ENCODE measurements at regions of chr7 and their contacts with region 1.

Region 1: GRCh38 chr7:141430455-141431137 is 120.6 kb upstream of the AGK start:
- DNase-seq: no peak
- H3K4me3 ChIP-seq: no peak overlapping the region
- H3K27ac ChIP-seq: no peak overlapping the region
- H3K4me1 ChIP-seq: no peaks in the 10 kb centered on the region
- H3K27me3 ChIP-seq: no peaks in the 10 kb centered on the region
- CTCF ChIP-seq: no peak

Region 2: GRCh38 chr7:140673063-140673773 is 757.4 kb before region 1 on chr7:
- CTCF ChIA-PET with region 1: interaction called, 17 read pairs
- dilution Hi-C with region 1: no loop called
- in situ Hi-C with region 1: no loop called
- intact Hi-C with region 1: no loop called
- DNase-seq: peak; percentile 56
- H3K4me3 ChIP-seq: peak overlapping the region; percentile 53 to 69 (median 64)
- H3K27ac ChIP-seq: no peak overlapping the region
- H3K4me1 ChIP-seq: peaks cover 26% of the 10 kb centered on the region
- H3K27me3 ChIP-seq: no peaks in the 10 kb centered on the region
- CTCF ChIP-seq: peak in 1 of 2 donors; percentile 3

Region 3: GRCh38 chr7:141209454-141209853 is 221.1 kb before region 1 on chr7:
- CTCF ChIA-PET with region 1: no interaction called
- dilution Hi-C with region 1: no loop called
- in situ Hi-C with region 1: no loop called
- intact Hi-C with region 1: no loop called
- DNase-seq: no peak
- H3K4me3 ChIP-seq: no peak overlapping the region
- H3K27ac ChIP-seq: peak overlapping the region; percentile 52
- H3K4me1 ChIP-seq: peaks cover 18% of the 10 kb centered on the region
- H3K27me3 ChIP-seq: peaks cover 3% of the 10 kb centered on the region
- CTCF ChIP-seq: no peak

Region 4: GRCh38 chr7:141354251-141354650 is 76.3 kb before region 1 on chr7:
- CTCF ChIA-PET with region 1: no interaction called
- dilution Hi-C with region 1: no loop called
- in situ Hi-C with region 1: no loop called
- intact Hi-C with region 1: no loop called
- DNase-seq: peak; percentile 34
- H3K4me3 ChIP-seq: no peak overlapping the region
- H3K27ac ChIP-seq: no peak overlapping the region
- H3K4me1 ChIP-seq: peaks cover 13% of the 10 kb centered on the region
- H3K27me3 ChIP-seq: no peaks in the 10 kb centered on the region
- CTCF ChIP-seq: no peak

Region 5: DNA sequence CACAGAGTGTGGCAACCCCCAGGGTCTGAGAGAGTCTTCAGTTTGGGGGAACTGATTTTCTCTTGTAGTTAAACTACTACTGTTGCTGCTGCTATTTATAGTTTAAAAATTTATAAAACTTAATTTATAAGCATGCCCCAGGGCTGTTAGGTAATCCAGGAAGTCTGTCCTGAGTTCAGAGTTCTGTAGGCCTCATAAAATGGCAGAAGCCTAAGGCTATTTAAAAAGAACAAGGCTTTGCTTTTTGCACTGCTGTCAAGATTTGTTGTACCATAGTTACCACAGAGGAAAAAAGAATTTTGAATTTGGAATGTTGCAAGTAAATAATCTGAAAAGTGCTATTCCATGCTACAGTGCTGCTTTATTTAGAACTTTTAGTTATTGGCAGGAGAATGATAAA is 186.7 kb after region 1 on chr7:
- CTCF ChIA-PET with region 1: no interaction called
- dilution Hi-C with region 1: no loop called
- in situ Hi-C with region 1: no loop called
- intact Hi-C with region 1: no loop called
- DNase-seq: peak; percentile 6
- H3K4me3 ChIP-seq: no peak overlapping the region
- H3K27ac ChIP-seq: no peak overlapping the region
- H3K4me1 ChIP-seq: peaks cover 5% of the 10 kb centered on the region
- H3K27me3 ChIP-seq: no peaks in the 10 kb centered on the region
- CTCF ChIP-seq: no peak

Region 6: DNA sequence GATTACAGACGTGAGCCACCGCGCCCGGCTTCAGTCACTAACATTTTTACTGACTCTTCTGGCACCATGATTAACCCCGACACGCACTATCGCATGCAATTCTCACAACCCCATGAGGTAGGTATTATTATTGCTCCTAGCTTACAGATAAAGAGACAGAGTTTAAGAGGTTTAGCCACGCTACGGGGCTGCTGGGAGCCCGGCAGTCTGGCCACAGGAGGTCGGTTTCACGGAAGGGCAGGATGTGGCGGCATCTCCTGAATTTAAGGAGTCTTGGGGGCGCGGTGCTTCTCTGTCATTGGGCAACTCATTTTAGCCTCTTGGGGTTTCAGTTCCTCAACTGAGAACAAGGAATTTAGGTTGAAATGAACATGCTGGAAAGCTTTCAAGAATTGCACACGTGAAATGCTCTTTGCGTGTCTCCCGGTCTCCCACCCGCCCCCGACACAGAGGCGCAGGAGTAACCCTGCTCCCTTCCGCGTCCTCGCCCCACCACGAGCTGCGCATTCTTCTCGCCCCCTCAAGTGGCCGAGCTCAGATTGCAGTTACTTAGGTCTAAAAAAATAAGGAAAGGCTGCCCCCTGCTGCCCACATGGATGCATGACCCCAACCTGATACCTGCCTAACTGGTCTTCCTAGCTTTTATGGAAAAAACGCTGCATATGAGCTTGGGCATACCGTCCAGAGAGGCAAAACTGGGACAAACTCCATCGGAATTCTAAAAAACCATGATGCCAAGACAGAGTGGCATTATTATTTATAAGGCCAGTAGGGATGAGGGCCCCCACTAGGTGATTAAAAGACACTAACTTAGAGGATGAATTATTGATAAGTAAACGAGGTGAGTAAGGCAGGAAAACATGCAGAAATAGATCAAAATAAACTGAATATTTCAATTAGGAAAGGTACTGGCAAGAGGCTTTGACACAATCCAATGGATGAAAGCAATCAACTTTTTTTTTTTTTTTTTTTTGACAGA is 1352.6 kb after region 1 on chr7:
- CTCF ChIA-PET with region 1: no interaction called
- dilution Hi-C with region 1: no loop called
- in situ Hi-C with region 1: no loop called
- intact Hi-C with region 1: no loop called
- DNase-seq: peak; percentile 75
- H3K4me3 ChIP-seq: peak overlapping the region; percentile 38 to 49 (median 43)
- H3K27ac ChIP-seq: no peak overlapping the region
- H3K4me1 ChIP-seq: no peaks in the 10 kb centered on the region
- H3K27me3 ChIP-seq: no peaks in the 10 kb centered on the region
- CTCF ChIP-seq: peak; percentile 97

Measured in mammary epithelial cell (primary cell).